ENCODE measurements at regions of chr9 and their contacts with region 1.

Region 1: DNA sequence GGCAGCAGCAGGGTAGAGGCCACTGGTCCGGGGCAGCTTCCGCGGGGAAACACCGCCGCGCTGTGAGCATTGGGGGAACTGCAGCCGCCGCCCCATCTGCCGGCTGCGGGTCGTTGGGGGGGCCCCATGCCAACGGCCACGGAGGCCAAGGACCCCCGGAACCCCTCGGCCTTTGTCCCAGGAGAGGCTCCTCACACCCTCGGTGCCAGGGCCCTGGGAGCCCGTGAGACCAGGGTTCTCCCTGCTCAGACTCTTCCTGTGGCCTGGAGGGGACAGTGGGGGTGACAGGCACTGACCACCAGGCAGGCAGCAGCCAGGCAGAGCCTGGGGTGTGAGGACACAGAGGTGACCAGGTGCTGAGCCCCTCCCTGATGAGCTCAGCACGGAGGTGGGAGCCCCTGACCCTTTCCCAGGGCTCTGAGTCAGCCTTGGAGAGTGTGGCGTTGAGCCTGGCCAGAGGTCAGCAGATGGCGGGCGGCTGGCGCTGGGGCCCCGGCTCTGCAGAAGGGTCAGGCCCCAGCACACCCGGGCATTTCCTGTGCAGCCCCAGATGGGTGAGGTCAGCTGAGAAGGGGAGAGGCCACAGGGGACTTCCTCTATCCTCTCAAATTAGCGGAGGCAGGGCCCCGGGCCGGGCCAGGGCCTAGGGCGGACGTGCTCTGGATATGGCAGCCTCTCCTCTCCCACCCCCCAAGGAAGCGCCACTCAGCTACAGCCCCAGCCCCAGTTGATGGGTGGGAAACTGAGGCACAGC is 17.9 kb upstream of the EGFL7 start:
- DNase-seq: peak; percentile 88
- H3K4me3 ChIP-seq: peak overlapping the region in 1 of 3 experiments; percentile 47
- H3K27ac ChIP-seq: peak overlapping the region; percentile 98
- H3K4me1 ChIP-seq: peaks cover 72% of the 10 kb centered on the region
- H3K27me3 ChIP-seq: no peaks in the 10 kb centered on the region
- CTCF ChIP-seq: peak; percentile 95 to 96
- POLR2A ChIP-seq: peak; percentile 72

Region 2: GRCh38 chr9:136488247-136489214 is 156.2 kb before region 1 on chr9:
- CTCF ChIA-PET with region 1: interaction called, 29 read pairs
- POLR2A ChIA-PET with region 1: interaction called, 4 read pairs
- dilution Hi-C with region 1: no loop called
- intact Hi-C with region 1: loop called (anchors 1 kb)
- DNase-seq: peak; percentile 54
- H3K4me3 ChIP-seq: no peak overlapping the region
- H3K27ac ChIP-seq: no peak overlapping the region
- H3K4me1 ChIP-seq: peaks cover 8% of the 10 kb centered on the region
- H3K27me3 ChIP-seq: no peaks in the 10 kb centered on the region
- CTCF ChIP-seq: peak; percentile 88 to 97
- POLR2A ChIP-seq: no peak

Region 3: DNA sequence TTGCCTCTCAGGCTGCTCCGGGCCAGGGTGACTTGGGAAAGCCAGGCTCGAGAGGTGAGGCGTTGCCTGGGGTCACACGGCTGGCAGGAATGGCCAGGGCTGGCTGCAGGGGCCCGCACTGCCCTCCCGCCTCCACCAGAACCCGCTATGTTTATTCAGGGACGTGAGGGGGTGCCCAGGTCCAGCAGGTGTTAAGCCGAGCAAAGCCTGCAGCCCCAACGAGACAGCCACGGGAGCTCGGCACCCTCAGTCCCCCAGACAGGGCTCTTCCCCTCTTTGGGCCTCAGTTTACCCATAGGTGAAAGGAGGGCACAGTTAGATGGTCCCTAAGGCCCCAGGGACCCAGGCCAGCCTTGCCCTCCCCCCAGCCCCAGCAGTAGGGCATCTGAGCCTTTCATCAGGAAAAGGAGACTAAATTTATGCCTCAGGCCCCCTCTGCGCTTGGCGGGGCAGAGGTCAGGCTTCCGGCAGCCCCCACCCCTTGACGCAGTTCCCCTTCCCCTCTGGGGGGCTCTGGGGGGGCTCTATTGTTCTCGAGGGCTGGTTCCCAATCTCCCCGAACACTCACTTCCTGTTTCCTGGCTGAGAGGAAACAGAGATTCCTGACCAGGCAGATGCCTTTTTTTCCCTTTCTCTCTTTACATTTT is 10.9 kb after region 1 on chr9:
- CTCF ChIA-PET with region 1: interaction called, 90 read pairs
- POLR2A ChIA-PET with region 1: interaction called, 161 read pairs
- dilution Hi-C with region 1: no loop called
- intact Hi-C with region 1: loop called (anchors 1 kb)
- DNase-seq: peak; percentile 99
- H3K4me3 ChIP-seq: no peak overlapping the region
- H3K27ac ChIP-seq: peak overlapping the region; percentile 98
- H3K4me1 ChIP-seq: peaks cover 56% of the 10 kb centered on the region
- H3K27me3 ChIP-seq: no peaks in the 10 kb centered on the region
- CTCF ChIP-seq: no peak
- POLR2A ChIP-seq: peak; percentile 87

Region 4: DNA sequence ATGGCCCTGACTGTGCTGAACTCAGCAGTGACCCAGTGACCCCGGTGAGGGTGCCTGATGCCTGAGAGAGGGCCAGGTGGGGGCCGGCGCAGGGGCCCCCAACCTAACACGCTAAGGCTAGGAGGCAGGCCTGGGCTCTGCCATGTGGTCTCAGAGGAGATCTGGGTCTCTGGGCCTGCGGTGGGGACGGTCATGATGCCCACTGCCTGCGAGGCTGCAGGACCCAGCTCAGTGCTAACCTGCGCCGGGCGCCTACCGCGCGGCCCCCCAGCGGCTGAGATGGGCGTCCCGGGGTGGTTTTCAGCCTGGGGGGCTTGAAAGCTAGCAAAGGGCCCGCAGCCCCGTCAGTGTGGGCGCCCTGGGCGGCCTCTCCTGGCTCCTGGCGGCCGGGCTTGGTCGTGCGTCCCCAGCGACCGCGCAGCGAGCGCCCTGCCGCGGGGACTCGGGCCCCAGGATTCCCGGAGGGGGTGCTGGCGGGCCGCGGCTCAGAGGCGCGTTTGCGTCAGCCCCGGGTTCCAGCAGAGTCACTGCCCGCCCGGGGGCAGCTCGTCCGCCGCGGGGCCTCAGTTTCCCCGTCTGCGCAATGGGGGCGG is 20.4 kb after region 1 on chr9:
- CTCF ChIA-PET with region 1: interaction called, 90 read pairs
- POLR2A ChIA-PET with region 1: interaction called, 161 read pairs
- dilution Hi-C with region 1: no loop called
- intact Hi-C with region 1: loop called (anchors 1 kb)
- DNase-seq: peak; percentile 28
- H3K4me3 ChIP-seq: peak overlapping the region; percentile 83 to 93 (median 90)
- H3K27ac ChIP-seq: peak overlapping the region; percentile 85
- H3K4me1 ChIP-seq: peaks cover 33% of the 10 kb centered on the region
- H3K27me3 ChIP-seq: no peaks in the 10 kb centered on the region
- CTCF ChIP-seq: peak; percentile 23 to 28
- POLR2A ChIP-seq: peak; percentile 95

Region 5: GRCh38 chr9:136671646-136672430 is 27.1 kb after region 1 on chr9:
- CTCF ChIA-PET with region 1: interaction called, 90 read pairs
- POLR2A ChIA-PET with region 1: interaction called, 161 read pairs
- dilution Hi-C with region 1: no loop called
- intact Hi-C with region 1: loop called (anchors 1 kb)
- DNase-seq: peak; percentile 62
- H3K4me3 ChIP-seq: peak overlapping the region in 1 of 3 experiments; percentile 3
- H3K27ac ChIP-seq: no peak overlapping the region
- H3K4me1 ChIP-seq: peaks cover 15% of the 10 kb centered on the region
- H3K27me3 ChIP-seq: no peaks in the 10 kb centered on the region
- CTCF ChIP-seq: peak; percentile 77 to 83
- POLR2A ChIP-seq: peak; percentile 88

Region 6: DNA sequence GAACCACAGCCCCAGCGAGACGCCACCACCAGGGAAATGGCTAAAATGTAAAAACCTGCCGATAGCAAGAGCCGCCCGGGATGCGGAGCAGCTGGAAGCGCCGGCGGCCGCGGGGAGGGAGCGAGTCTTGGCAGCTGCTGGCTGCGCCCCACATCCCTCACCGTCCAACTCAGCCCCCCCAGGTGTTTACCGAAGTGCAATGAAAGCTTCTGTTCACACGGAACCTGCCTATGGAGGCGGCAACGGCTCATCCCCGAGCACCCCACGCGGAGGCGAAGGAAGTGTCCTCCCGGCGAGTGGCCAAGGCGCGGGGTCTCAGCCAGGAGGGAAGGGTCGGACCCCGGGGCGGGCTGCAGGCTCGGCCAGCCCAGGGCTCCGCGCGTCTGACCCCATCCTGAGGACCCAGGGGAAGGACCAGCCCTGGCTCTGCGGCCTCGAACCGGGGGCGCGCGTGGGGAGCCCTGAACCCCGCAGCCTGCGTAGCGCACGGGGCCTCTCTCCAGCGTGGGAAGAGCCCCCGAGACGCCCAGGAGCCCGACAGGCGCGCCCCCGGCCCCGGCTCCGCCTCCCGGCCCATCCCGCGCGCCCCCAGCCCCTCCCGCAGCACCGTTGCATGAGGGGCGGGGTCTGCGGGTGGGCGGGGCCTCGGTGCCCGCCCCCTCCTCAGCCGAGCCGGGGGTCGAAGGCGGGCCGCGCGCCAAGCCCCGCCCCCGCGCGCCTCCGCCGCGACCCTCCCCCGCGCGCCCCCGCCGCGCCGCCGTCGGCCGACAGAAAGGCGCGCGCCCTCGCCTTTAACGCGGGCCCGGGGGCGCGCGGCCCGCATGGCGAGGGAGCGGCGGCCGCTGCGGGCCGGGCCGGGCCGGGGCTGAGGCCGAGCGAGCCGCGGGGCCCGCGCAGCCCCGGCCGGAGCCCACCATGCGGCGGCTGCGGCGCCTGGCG is 67.2 kb after region 1 on chr9 and contains the start of gene DIPK1B:
- CTCF ChIA-PET with region 1: interaction called, 6 read pairs
- POLR2A ChIA-PET with region 1: interaction called, 3 read pairs
- dilution Hi-C with region 1: no loop called
- intact Hi-C with region 1: loop called (anchors 2 kb)
- DNase-seq: peak; percentile 48
- H3K4me3 ChIP-seq: peak within 1 kb of the TSS; percentile 68 to 81 (median 75)
- H3K27ac ChIP-seq: peak within 1 kb of the TSS; percentile 96
- H3K4me1 ChIP-seq: peaks cover 27% of the 10 kb centered on the region
- H3K27me3 ChIP-seq: no peaks in the 10 kb centered on the region
- CTCF ChIP-seq: no peak
- POLR2A ChIP-seq: no peak
- total RNA-seq, gene DIPK1B: 242 and 253 TPM in 2 replicates

Measured in endothelial cell of umbilical vein (primary cell).